ENCODE measurements at regions of chr12 and their contacts with region 1.

Region 1: DNA sequence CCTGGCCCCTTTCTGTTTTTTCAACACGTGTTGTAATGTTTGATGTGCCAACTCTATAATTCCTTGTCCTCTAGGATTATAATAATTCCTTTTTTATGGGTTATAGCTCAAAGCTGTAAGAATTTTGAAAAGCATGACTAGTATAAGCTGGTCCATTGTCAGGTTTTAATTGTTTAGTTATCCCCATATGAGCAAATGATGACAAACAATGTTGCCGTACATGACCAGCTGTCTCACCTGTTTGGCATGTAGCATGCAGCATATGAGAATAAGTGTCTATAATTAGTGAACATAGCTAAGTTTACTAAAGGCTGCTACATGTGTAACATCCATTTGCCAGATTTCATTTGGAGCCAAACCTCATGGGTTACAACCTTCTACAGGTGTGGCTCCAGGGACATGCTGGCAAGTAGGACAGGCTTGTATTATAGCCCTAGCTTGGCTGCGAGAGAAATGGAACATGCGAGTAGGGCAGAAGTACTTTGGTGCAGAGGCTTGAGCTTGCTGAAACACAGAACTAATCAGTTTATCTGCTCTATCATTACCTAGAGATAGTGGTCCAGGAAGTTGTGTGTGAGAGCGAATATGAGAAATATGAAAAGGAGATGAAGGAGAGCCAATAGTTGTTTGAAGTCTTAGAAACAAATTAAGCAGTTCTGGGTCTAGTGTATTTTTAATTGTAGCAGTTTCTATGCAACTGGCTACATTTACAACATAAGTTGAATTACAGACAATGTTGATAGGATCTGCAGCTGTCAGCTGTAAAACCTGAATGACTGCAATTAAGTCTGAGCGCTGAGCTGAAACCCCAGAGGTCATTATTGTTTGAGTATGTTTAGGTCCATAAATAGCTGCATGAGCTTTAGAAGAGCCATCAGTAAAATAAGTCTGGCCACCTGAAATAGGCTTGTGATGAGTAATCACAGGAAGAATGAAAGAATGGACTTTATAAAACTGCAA is 22.6 kb upstream of the MAPKAPK5 start:
- H3K4me3 Mint-ChIP-seq: no peak overlapping the region
- H3K27ac Mint-ChIP-seq: no peak overlapping the region
- H3K4me1 Mint-ChIP-seq: peaks cover 28% of the 10 kb centered on the region
- H3K27me3 Mint-ChIP-seq: peaks cover 1% of the 10 kb centered on the region

Region 2: GRCh38 chr12:111887926-111888745 is 68.7 kb after region 1 on chr12:
- intact Hi-C with region 1: loop called (anchors 10 kb)
- H3K4me3 Mint-ChIP-seq: peak overlapping the region; percentile 17
- H3K27ac Mint-ChIP-seq: peak overlapping the region; percentile 85
- H3K4me1 Mint-ChIP-seq: peaks cover 34% of the 10 kb centered on the region
- H3K27me3 Mint-ChIP-seq: no peaks in the 10 kb centered on the region

Region 3: GRCh38 chr12:112025808-112026375 is 206.4 kb after region 1 on chr12:
- intact Hi-C with region 1: loop called (anchors 10 kb)
- H3K4me3 Mint-ChIP-seq: no peak overlapping the region
- H3K27ac Mint-ChIP-seq: peak overlapping the region; percentile 81
- H3K4me1 Mint-ChIP-seq: peaks cover 25% of the 10 kb centered on the region
- H3K27me3 Mint-ChIP-seq: no peaks in the 10 kb centered on the region